PC-9 (cell line): ENCODE measurements at regions of chr7 and their contacts with region 1.

Region 1: DNA sequence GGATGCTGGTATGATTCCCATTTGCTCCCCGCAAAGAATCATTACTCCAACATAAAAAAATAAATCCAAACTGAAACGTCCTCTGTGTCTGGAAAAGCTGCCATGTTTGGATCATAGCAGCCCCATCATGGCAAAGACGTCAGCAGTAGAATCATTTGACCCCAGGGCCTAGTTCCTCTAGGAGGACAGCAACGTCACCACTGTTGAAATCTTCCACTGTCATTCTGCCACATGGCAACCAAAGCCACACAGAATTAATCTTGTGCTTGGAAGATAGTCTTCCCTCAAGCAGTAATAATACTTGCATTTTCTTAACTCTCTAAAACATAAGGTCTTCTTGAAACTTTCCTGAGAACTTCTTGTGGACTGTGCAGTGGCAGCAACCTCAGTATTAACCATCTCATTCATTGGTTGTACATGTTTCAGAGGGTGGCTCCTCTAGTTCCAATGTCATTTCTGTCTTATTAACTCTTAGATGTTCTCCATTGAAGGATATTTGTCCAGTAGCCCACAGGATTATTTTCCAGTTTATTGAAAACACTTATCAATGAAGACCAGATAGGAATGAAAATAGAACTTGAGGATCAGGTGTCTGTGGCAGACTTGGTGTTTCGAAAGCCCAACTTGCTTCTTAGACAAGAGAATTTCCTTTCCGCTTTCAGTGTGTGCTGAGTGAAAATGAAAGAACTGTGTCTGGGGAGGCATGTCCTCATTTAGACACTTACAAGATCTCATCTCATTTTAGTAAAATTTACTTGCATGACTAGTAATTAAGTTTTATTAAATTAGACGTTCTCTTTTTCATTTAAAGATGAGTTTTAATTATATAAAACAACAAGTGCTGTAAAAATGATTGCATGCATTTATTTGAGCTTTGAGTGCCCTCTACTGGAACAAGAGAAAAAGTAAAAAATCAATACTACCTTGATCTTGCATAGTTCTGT is 28.9 kb upstream of the INHBA start:
- DNase-seq: no peak
- H3K4me3 ChIP-seq: no peak overlapping the region
- H3K27ac ChIP-seq: no peak overlapping the region
- H3K4me1 ChIP-seq: no peaks in the 10 kb centered on the region
- H3K27me3 ChIP-seq: no peaks in the 10 kb centered on the region
- CTCF ChIP-seq: peak; percentile 93

Region 2: DNA sequence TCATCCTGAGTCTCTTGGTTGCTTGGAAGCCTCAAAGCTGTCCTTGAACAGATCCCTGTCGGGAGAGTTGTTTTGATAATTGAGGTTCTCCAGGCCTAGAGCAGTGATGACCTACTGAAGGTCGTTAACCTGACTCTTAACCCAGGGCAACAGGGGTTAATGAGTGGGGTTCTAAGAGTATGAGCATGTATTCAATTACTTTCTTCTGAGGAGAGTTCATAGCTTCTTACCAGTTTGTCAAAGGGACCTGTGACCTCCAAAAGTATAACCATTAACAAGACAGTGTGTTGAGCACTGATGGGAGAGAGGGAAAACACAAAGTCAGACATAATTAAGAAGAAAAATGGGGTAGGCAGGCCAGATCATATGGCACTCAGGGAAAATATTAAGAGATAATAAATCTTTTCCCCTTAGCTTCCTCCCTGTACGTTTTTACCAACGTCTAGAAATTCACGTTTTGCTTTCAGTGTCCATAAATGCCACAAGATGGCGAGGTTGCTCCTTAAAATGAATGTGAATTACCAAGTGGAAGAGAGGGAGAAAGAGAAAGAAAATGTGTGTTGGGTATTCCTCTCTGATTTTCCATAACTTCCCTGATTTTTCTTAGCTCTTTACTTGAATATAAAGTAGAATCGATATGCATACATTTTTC is 1499.4 kb before region 1 on chr7:
- CTCF ChIA-PET with region 1: interaction called, 5 read pairs
- POLR2A ChIA-PET with region 1: no interaction called
- intact Hi-C with region 1: loop called (anchors 1 kb)
- DNase-seq: peak; percentile 28 to 48
- H3K4me3 ChIP-seq: no peak overlapping the region
- H3K27ac ChIP-seq: no peak overlapping the region
- H3K4me1 ChIP-seq: no peaks in the 10 kb centered on the region
- H3K27me3 ChIP-seq: no peaks in the 10 kb centered on the region
- CTCF ChIP-seq: peak; percentile 84